CD8-positive, alpha-beta T cell (primary cell): ENCODE measurements at regions of chr15 and their contacts with region 1.

Region 1: GRCh38 chr15:42107473-42107872 is 13.1 kb upstream of the PLA2G4D start:
- DNase-seq: no peak
- ATAC-seq: no peak
- H3K4me3 ChIP-seq: no peak overlapping the region
- H3K4me3 Mint-ChIP-seq: no peak overlapping the region
- H3K27ac ChIP-seq: no peak overlapping the region
- H3K27ac Mint-ChIP-seq: no peak overlapping the region
- H3K4me1 ChIP-seq: no peaks in the 10 kb centered on the region
- H3K4me1 Mint-ChIP-seq: peaks cover 4% of the 10 kb centered on the region
- H3K27me3 ChIP-seq: peaks cover 0 to 2% of the 10 kb centered on the region in 2 experiments
- H3K27me3 Mint-ChIP-seq: peaks cover 29% of the 10 kb centered on the region
- CTCF ChIP-seq: no peak

Region 2: DNA sequence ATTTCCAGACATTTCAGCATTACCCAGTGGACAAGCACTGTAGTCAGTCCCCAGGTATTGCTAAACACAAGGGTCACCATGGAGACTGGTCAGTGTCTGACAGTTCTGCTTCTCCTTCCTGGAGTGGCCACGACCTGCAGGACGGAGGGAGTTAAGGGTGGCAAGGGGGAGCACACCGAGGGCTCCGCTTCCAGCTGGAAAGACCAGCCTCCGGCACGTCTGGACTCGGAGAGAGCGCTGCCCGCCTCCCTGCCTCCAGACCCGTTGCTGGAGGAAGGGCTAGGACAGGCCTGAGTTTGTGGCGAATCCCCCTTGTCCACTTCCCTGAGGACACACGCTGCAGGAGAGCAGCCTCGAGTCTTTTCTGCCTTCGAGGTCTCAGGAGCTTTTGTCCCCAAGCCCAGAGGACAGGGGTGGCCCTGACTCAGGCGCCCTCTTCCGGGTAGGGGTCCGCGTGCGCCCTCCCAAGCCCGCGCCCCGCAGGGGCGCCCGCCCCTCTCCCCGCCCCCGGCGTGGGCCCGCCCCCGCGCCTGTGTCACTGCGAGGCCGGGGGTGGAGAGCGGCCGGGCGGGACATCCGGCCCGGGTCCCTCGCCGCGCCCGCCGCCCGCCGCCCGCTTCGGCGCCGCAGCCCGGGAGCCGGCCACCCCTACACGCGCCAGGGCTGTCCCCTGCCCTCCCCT is 1636.9 kb before region 1 on chr15 and contains the start of gene CHST14:
- CTCF ChIA-PET with region 1: no interaction called
- POLR2A ChIA-PET with region 1: no interaction called
- intact Hi-C with region 1: no loop called
- DNase-seq: peak; percentile 19 to 78 (median 57)
- ATAC-seq: peak; percentile 86
- H3K4me3 ChIP-seq: peak within 1 kb of the TSS; percentile 77 to 88
- H3K4me3 Mint-ChIP-seq: peak within 1 kb of the TSS; percentile 89
- H3K27ac ChIP-seq: peak within 1 kb of the TSS; percentile 52 to 82
- H3K27ac Mint-ChIP-seq: peak within 1 kb of the TSS; percentile 85
- H3K4me1 ChIP-seq: peaks cover 25% of the 10 kb centered on the region
- H3K4me1 Mint-ChIP-seq: peaks cover 15% of the 10 kb centered on the region
- H3K27me3 ChIP-seq: no peaks in the 10 kb centered on the region
- H3K27me3 Mint-ChIP-seq: no peaks in the 10 kb centered on the region
- CTCF ChIP-seq: no peak
- total RNA-seq, gene CHST14: 3.7 to 4.1 TPM

Region 3: GRCh38 chr15:42128476-42128875 is 21.0 kb after region 1 on chr15:
- CTCF ChIA-PET with region 1: interaction called, 3 read pairs
- POLR2A ChIA-PET with region 1: no interaction called
- intact Hi-C with region 1: loop called in 1 of 2 experiments (anchors 1 kb)
- DNase-seq: no peak
- ATAC-seq: no peak
- H3K4me3 ChIP-seq: no peak overlapping the region
- H3K4me3 Mint-ChIP-seq: no peak overlapping the region
- H3K27ac ChIP-seq: no peak overlapping the region
- H3K27ac Mint-ChIP-seq: no peak overlapping the region
- H3K4me1 ChIP-seq: no peaks in the 10 kb centered on the region
- H3K4me1 Mint-ChIP-seq: no peaks in the 10 kb centered on the region
- H3K27me3 ChIP-seq: no peaks in the 10 kb centered on the region
- H3K27me3 Mint-ChIP-seq: peaks cover 16% of the 10 kb centered on the region
- CTCF ChIP-seq: no peak